ENCODE measurements at regions of chr11 and their contacts with region 1.

Region 1: DNA sequence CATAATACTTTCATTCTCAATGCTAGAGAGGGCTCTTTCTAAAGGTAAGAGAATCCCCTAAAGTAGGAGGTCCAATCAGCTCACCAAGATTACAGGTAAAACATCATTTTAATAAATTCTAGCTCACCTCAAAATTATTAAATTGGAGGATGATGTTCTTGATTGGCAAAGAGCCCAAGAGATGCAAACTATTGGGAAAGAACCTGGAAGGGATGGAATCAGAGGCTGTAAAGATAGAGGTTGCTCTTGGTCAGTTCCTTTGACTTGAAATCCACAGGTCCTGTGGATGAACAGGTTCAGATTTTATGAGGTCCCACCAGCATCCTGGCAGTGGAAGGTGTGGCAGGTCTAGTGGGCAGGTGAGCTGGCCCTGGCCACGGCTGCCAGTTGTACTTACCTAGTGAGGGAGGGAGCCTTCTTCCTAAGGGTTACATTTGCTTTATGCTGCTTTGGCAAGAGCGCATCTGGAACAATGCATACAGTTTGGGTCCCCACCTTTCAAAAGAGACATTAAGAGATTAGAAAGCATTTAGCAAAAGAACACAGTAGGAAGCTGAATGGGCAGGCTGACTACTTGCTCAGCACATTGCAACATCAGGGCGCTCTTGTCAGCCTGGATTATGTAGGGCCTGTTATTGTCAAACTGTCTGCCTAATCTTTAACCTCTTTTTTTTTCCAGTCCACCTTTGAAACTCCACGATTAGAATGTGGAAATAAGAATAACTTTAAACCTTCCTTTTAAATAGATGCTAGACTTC is 97.1 kb downstream of the RDX start:
- DNase-seq: no peak
- ATAC-seq: no peak
- H3K4me3 ChIP-seq: no peak overlapping the region
- H3K4me3 Mint-ChIP-seq: no peak overlapping the region
- H3K27ac ChIP-seq: no peak overlapping the region
- H3K27ac Mint-ChIP-seq: no peak overlapping the region
- H3K4me1 ChIP-seq: no peaks in the 10 kb centered on the region
- H3K4me1 Mint-ChIP-seq: no peaks in the 10 kb centered on the region
- H3K27me3 ChIP-seq: peaks cover 0 to 8% of the 10 kb centered on the region in 2 experiments
- H3K27me3 Mint-ChIP-seq: peaks cover 0 to 5% of the 10 kb centered on the region in 2 donors

Region 2: DNA sequence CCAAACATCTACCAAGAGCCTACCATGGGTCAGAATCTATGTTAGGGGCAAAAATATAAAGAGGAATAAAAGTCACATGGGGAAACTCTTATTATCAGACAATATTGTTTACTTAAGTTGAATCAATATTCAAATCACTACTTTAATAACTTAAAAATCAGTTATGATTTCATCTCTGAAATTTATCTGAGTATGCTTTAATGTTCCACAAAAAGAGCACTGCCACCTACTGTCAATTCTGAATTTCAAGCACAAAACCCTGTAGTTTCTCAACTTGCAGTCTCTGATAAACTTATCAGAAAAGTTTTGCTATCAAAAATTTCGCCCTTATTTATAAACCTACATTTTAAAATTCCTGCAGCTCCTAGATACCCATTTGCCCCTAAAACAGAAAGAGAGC is 49.7 kb after region 1 on chr11:
- CTCF ChIA-PET with region 1: interaction called, 5 to 10 read pairs
- POLR2A ChIA-PET with region 1: no interaction called
- DNase-seq: peak in 1 of 35 experiments; percentile 16
- ATAC-seq: no peak
- H3K4me3 ChIP-seq: no peak overlapping the region
- H3K4me3 Mint-ChIP-seq: no peak overlapping the region
- H3K27ac ChIP-seq: no peak overlapping the region
- H3K27ac Mint-ChIP-seq: peak overlapping the region in 1 of 2 donors; percentile 23
- H3K4me1 ChIP-seq: no peaks in the 10 kb centered on the region
- H3K4me1 Mint-ChIP-seq: no peaks in the 10 kb centered on the region
- H3K27me3 ChIP-seq: no peaks in the 10 kb centered on the region
- H3K27me3 Mint-ChIP-seq: no peaks in the 10 kb centered on the region

Region 3: DNA sequence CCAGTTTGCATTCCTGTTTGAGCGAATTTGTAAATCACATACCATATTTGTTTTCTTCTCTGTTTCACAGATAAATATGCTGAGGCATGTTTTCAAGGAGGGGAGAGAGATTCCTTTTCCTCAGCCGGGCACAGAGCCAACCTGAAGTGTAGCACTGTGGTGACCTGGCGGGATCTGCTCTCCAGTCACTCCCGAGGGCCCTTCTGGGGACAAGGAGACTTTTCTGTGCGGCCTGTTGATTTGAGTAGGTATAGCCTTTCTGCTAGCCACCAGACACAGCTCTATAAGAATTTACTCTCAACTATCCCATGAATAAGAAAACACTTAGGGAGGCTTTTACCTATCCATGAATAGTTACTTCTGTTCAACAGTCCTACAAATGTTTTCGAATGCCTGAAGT is 166.9 kb after region 1 on chr11:
- CTCF ChIA-PET with region 1: interaction called, 7 to 42 read pairs
- POLR2A ChIA-PET with region 1: no interaction called
- DNase-seq: no peak
- ATAC-seq: no peak
- H3K4me3 ChIP-seq: no peak overlapping the region
- H3K4me3 Mint-ChIP-seq: no peak overlapping the region
- H3K27ac ChIP-seq: no peak overlapping the region
- H3K27ac Mint-ChIP-seq: no peak overlapping the region
- H3K4me1 ChIP-seq: no peaks in the 10 kb centered on the region
- H3K4me1 Mint-ChIP-seq: no peaks in the 10 kb centered on the region
- H3K27me3 ChIP-seq: no peaks in the 10 kb centered on the region
- H3K27me3 Mint-ChIP-seq: no peaks in the 10 kb centered on the region

Region 4: DNA sequence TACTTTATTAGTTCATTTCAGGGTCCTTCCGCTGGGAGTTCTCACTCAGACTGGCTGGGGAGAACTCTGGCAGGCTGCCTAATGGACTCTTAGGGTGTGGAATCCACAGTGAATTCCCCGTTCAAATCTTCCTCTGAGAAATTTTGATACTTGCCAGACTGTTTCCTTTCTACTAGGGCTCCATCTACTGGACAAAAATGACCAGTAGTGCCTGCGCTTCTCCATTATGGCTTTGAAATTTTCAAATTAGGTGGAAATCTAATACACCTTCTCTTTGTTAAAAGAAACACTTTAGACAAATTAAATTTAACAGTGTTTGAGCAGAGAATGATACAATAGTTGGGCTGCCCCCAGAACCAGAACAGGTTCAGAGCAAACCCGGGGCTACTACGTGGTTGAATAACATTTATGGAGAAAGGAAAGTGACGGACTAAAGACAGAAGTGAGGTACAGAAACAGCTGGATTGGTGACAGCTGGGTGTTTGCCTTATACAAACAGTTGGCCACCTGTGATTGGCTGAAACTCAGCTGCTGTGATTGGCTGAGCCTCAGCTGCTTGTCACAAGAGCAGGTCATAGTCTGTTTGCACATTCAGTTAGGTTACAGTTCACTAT is 177.5 kb after region 1 on chr11:
- CTCF ChIA-PET with region 1: interaction called, 9 to 16 read pairs
- POLR2A ChIA-PET with region 1: no interaction called
- DNase-seq: peak in 10 of 35 experiments; percentile 4 to 68 (median 10)
- ATAC-seq: peak; percentile 48 to 59 (median 55)
- H3K4me3 ChIP-seq: no peak overlapping the region
- H3K4me3 Mint-ChIP-seq: no peak overlapping the region
- H3K27ac ChIP-seq: no peak overlapping the region
- H3K27ac Mint-ChIP-seq: no peak overlapping the region
- H3K4me1 ChIP-seq: peaks cover 0 to 3% of the 10 kb centered on the region in 2 experiments
- H3K4me1 Mint-ChIP-seq: peaks cover 0 to 5% (median 4%) of the 10 kb centered on the region in 3 donors
- H3K27me3 ChIP-seq: no peaks in the 10 kb centered on the region
- H3K27me3 Mint-ChIP-seq: peaks cover 0 to 3% of the 10 kb centered on the region in 2 donors

Region 5: GRCh38 chr11:110429731-110430266 is 230.4 kb after region 1 on chr11 and contains the start of gene FDX1:
- CTCF ChIA-PET with region 1: interaction called, 14 to 119 read pairs
- POLR2A ChIA-PET with region 1: interaction called in 1 of 2 experiments, 3 read pairs
- DNase-seq: peak; percentile 57 to 87 (median 68)
- ATAC-seq: peak; percentile 84 to 88 (median 84)
- H3K4me3 ChIP-seq: peak within 1 kb of the TSS; percentile 68 to 88
- H3K4me3 Mint-ChIP-seq: peak within 1 kb of the TSS; percentile 97 to 100 (median 98)
- H3K27ac ChIP-seq: peak within 1 kb of the TSS; percentile 69
- H3K27ac Mint-ChIP-seq: peak within 1 kb of the TSS; percentile 96 to 97
- H3K4me1 ChIP-seq: peaks cover 19 to 25% of the 10 kb centered on the region in 2 experiments
- H3K4me1 Mint-ChIP-seq: peaks cover 45 to 53% (median 45%) of the 10 kb centered on the region in 3 donors
- H3K27me3 ChIP-seq: no peaks in the 10 kb centered on the region
- H3K27me3 Mint-ChIP-seq: no peaks in the 10 kb centered on the region
- total RNA-seq, gene FDX1: 9.1 to 12.5 (median 10.1) TPM